OCI-LY7 (cell line): ENCODE measurements at regions of chr17 and their contacts with region 1.

Region 1: GRCh38 chr17:58337600-58338453 is 9.2 kb upstream of the TSPOAP1 start:
- DNase-seq: peak; percentile 96
- H3K4me3 ChIP-seq: peak overlapping the region; percentile 98
- H3K27ac ChIP-seq: peak overlapping the region; percentile 99
- H3K4me1 ChIP-seq: peaks cover 94% of the 10 kb centered on the region
- CTCF ChIP-seq: no peak

Region 2: GRCh38 chr17:57622683-57623433 is 715.0 kb before region 1 on chr17:
- CTCF ChIA-PET with region 1: interaction called, 3 read pairs
- POLR2A ChIA-PET with region 1: no interaction called
- intact Hi-C with region 1: loop called (anchors 10 kb)
- DNase-seq: peak; percentile 88
- H3K4me3 ChIP-seq: peak overlapping the region; percentile 50
- H3K27ac ChIP-seq: peak overlapping the region; percentile 76
- H3K4me1 ChIP-seq: peaks cover 52% of the 10 kb centered on the region
- CTCF ChIP-seq: no peak

Region 3: GRCh38 chr17:58352014-58352842 is 14.4 kb after region 1 on chr17 and contains the start of gene SUPT4H1:
- CTCF ChIA-PET with region 1: interaction called, 4 read pairs
- POLR2A ChIA-PET with region 1: interaction called, 179 read pairs
- intact Hi-C with region 1: no loop called
- DNase-seq: peak; percentile 98
- H3K4me3 ChIP-seq: peak within 1 kb of the TSS; percentile 79
- H3K27ac ChIP-seq: peak within 1 kb of the TSS; percentile 85
- H3K4me1 ChIP-seq: peaks cover 32% of the 10 kb centered on the region
- CTCF ChIP-seq: no peak
- total RNA-seq, gene SUPT4H1: 41.1 and 56.5 TPM in 2 replicates

Region 4: GRCh38 chr17:58369214-58370031 is 31.6 kb after region 1 on chr17:
- CTCF ChIA-PET with region 1: no interaction called
- POLR2A ChIA-PET with region 1: interaction called, 20 read pairs
- intact Hi-C with region 1: loop called (anchors 2 kb)
- DNase-seq: no peak
- H3K4me3 ChIP-seq: no peak overlapping the region
- H3K27ac ChIP-seq: no peak overlapping the region
- H3K4me1 ChIP-seq: peaks cover 45% of the 10 kb centered on the region
- CTCF ChIP-seq: no peak

Region 5: GRCh38 chr17:59155439-59156182 is 817.8 kb after region 1 on chr17 and contains the start of gene PRR11:
- CTCF ChIA-PET with region 1: no interaction called
- POLR2A ChIA-PET with region 1: no interaction called
- intact Hi-C with region 1: loop called (anchors 10 kb)
- DNase-seq: peak; percentile 99
- H3K4me3 ChIP-seq: peak within 1 kb of the TSS; percentile 94
- H3K27ac ChIP-seq: peak within 1 kb of the TSS; percentile 91
- H3K4me1 ChIP-seq: peaks cover 68% of the 10 kb centered on the region
- CTCF ChIP-seq: no peak
- total RNA-seq, gene PRR11: 21.9 and 27.3 TPM in 2 replicates